ENCODE measurements at regions of chr7 and their contacts with region 1.

Region 1: DNA sequence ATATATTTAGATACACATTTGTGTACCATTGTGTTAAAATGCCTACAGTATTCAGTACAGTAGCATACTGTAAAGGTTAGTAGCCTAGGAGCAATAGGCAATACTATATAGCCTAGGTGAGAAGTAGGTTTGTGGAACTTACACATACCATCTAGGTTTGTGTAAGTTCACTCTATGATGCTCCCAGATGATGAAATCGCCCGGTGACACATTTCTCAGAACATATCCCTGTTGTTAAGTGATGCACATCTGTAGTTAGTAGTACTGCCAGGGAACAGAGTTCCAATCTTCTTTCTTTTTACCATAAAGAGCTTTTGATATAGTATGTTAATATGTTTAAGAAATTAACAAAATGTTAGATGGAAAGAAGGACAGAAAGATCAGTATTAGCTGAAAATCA is 138.2 kb downstream of the SNX13 start:
- DNase-seq: no peak
- H3K4me3 ChIP-seq: no peak overlapping the region
- H3K27ac ChIP-seq: no peak overlapping the region
- H3K4me1 ChIP-seq: peaks cover 0 to 6% (median 2%) of the 10 kb centered on the region in 4 experiments; a peak in 2 of 7 replicates
- H3K27me3 ChIP-seq: no peaks in the 10 kb centered on the region
- CTCF ChIP-seq: no peak
- EP300 ChIP-seq: no peak
- POLR2A ChIP-seq: no peak
- RAD21 ChIP-seq: no peak

Region 2: DNA sequence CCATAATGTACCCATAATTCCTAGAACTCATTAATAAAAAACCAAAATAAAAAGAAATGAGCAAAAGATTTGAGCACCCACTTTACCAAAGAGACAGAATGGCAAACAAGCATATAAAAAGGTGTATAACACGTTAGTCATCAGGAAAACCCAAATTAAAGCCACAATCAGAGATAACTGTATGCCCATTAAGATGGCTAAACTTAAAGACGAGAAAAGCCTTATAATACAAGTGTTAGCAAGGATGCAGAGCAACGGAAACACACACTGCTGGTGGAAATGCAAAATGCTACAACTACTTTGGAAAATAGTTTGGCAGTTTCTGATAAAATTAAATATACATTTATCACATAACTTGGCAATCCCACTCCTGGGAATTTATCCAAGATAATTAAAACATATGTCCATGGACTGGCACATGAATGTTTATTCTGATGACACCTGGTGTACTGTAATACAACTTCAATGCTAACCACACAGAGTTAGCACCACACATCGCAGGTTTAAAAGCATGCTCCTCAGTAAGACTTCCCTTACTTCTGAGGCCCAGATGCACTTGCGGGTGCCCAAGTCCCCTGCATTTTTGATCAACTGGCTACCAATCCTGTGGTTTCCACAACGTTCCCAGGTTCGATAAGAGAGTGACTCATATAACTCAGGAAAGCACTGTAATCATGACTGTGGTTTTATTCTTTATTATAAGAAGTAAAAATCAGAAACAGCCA is 20.4 kb before region 1 on chr7:
- CTCF ChIA-PET with region 1: interaction called, 10 read pairs
- POLR2A ChIA-PET with region 1: interaction called, 4 read pairs
- DNase-seq: no peak
- H3K4me3 ChIP-seq: no peak overlapping the region
- H3K27ac ChIP-seq: no peak overlapping the region
- H3K4me1 ChIP-seq: no peaks in the 10 kb centered on the region
- H3K27me3 ChIP-seq: no peaks in the 10 kb centered on the region
- CTCF ChIP-seq: no peak
- EP300 ChIP-seq: no peak
- POLR2A ChIP-seq: no peak
- RAD21 ChIP-seq: no peak

Region 3: DNA sequence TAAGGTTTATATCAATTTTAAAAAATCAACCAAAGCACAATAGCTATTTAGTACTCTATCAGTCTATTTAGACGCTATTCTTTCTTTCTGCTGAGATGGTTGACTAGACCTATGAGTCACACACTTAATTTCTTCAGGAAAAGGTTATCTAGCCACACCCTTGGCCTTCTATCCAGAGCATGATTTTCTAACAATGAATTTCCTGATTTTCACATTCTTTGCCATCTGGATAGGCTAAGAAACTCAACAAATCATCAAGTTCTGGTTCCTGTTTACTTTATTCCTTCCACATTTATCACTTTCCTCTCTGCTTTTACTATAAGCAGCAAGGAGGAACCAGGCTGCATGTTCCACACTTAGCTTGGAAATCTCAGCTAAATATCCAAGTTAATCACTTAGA is 217.5 kb after region 1 on chr7:
- CTCF ChIA-PET with region 1: no interaction called
- POLR2A ChIA-PET with region 1: no interaction called
- DNase-seq: no peak
- H3K4me3 ChIP-seq: no peak overlapping the region
- H3K27ac ChIP-seq: no peak overlapping the region
- H3K4me1 ChIP-seq: no peaks in the 10 kb centered on the region
- H3K27me3 ChIP-seq: no peaks in the 10 kb centered on the region
- CTCF ChIP-seq: no peak
- EP300 ChIP-seq: no peak
- POLR2A ChIP-seq: no peak
- RAD21 ChIP-seq: no peak

Region 4: GRCh38 chr7:18086165-18087030 is 284.3 kb after region 1 on chr7:
- CTCF ChIA-PET with region 1: no interaction called
- POLR2A ChIA-PET with region 1: no interaction called
- DNase-seq: peak in 1 of 2 experiments; percentile 69
- H3K4me3 ChIP-seq: peak overlapping the region; percentile 38 to 89 (median 64)
- H3K27ac ChIP-seq: no peak overlapping the region
- H3K4me1 ChIP-seq: peaks cover 0 to 9% (median 3%) of the 10 kb centered on the region in 4 experiments; a peak in 4 of 7 replicates
- H3K27me3 ChIP-seq: peaks cover 5 to 27% (median 17%) of the 10 kb centered on the region in 4 experiments
- CTCF ChIP-seq: no peak
- EP300 ChIP-seq: no peak
- POLR2A ChIP-seq: no peak
- RAD21 ChIP-seq: no peak